Heart left ventricle (tissue), 16 donors: ENCODE measurements at regions of chr14 and their contacts with region 1.

Region 1: DNA sequence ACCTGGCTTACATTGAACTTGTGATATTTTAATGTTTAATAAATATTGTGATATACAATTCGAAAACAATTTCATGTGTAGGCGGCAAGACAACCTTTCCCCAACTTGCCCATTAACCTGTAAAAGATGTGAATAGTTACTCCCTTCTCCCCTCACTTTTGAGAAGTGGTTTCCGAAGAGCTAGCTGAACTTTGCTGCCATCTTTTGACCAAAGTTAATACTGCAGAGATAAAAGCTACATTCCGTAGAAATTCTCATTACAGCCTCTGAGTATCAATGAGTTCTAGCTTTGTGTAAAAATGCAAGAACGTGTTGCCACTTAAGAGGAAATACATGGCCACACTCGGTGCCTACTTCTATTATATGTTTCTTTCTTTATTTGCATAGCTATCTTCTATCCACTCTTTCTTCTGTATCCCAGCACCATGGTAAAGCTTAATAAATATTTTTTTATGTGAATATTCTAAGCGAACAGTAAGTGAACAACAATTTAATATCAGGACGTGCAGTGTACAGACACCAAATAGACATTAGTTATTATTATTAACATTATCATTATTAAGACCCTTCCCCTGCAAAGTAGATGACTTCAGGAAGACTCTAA is 105.1 kb upstream of the TMEM260 start:
- DNase-seq: no peak
- ATAC-seq: no peak
- H3K4me3 ChIP-seq: no peak overlapping the region
- H3K27ac ChIP-seq: no peak overlapping the region
- H3K4me1 ChIP-seq: no peaks in the 10 kb centered on the region
- H3K27me3 ChIP-seq: peaks cover 0 to 8% (median 0%) of the 10 kb centered on the region in 9 donors
- CTCF ChIP-seq: peak; percentile 69 to 93 (median 82)
- POLR2A ChIP-seq: no peak

Region 2: DNA sequence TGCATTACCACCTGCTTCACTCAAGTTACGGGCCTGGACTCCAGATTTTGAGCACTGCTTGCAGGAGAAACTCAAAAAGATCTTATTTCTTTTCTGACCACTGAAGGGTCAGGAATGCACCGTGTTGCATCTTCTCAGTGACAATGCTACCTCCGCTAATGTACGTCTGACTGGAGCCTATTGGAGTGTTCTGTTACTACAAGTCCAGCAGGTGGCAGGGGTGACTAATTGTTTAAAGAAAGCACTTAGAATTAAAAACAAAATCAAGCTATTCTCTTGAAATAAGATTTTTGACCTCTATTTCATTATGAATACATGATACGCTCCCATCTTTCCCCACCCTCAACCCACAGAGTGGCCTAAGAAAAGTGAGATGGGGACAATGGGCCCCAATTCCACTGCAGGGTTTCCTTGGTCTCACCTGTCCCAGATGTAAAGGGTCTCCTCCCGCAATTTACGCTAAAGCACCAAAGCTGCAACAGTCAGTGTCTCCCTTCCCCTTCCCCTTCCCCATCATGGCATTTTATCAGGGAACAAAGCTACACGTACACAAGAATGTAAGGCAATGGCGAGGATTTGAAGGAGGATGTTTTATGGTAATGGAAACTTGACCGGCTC is 1036.3 kb before region 1 on chr14:
- intact Hi-C with region 1: loop called in 5 of 10 experiments (anchors 5 to 10 kb)
- DNase-seq: no peak
- ATAC-seq: peak in 3 of 4 donors; percentile 57 to 66 (median 57)
- H3K4me3 ChIP-seq: no peak overlapping the region
- H3K27ac ChIP-seq: no peak overlapping the region
- H3K4me1 ChIP-seq: no peaks in the 10 kb centered on the region
- H3K27me3 ChIP-seq: peaks cover 0 to 17% (median 0%) of the 10 kb centered on the region in 9 donors
- CTCF ChIP-seq: peak; percentile 22 to 65 (median 46)
- POLR2A ChIP-seq: no peak

Region 3: DNA sequence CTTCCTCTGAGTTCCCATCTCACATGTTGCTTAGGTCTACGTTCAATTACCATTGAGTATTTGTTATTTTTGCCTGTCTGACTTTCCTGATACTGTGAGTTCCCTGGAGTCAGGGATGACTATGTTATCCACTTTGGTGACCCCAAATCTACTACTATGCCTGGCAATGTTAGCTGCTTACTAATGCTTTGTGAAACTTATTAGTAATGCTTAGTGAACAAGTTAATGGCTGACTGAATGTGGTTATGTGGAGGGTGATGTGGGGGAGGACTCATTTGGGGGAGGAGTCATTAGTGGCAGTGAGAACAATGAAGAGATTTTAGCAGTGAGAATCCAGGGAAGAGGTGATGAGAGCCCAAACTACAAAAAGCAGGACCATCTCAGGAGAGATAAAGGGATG is 772.9 kb before region 1 on chr14:
- intact Hi-C with region 1: loop called in 8 of 10 experiments (anchors 2 to 5 kb)
- DNase-seq: no peak
- ATAC-seq: no peak
- H3K4me3 ChIP-seq: no peak overlapping the region
- H3K27ac ChIP-seq: no peak overlapping the region
- H3K4me1 ChIP-seq: no peaks in the 10 kb centered on the region
- H3K27me3 ChIP-seq: no peaks in the 10 kb centered on the region
- CTCF ChIP-seq: no peak
- POLR2A ChIP-seq: no peak

Region 4: GRCh38 chr14:55731881-55732498 is 742.5 kb before region 1 on chr14:
- intact Hi-C with region 1: loop called in 4 of 10 experiments (anchors 5 to 10 kb)
- DNase-seq: peak in 1 of 5 donors; percentile 32
- ATAC-seq: no peak
- H3K4me3 ChIP-seq: no peak overlapping the region
- H3K27ac ChIP-seq: no peak overlapping the region
- H3K4me1 ChIP-seq: no peaks in the 10 kb centered on the region
- H3K27me3 ChIP-seq: no peaks in the 10 kb centered on the region
- CTCF ChIP-seq: peak; percentile 35 to 70 (median 58)
- POLR2A ChIP-seq: no peak

Region 5: DNA sequence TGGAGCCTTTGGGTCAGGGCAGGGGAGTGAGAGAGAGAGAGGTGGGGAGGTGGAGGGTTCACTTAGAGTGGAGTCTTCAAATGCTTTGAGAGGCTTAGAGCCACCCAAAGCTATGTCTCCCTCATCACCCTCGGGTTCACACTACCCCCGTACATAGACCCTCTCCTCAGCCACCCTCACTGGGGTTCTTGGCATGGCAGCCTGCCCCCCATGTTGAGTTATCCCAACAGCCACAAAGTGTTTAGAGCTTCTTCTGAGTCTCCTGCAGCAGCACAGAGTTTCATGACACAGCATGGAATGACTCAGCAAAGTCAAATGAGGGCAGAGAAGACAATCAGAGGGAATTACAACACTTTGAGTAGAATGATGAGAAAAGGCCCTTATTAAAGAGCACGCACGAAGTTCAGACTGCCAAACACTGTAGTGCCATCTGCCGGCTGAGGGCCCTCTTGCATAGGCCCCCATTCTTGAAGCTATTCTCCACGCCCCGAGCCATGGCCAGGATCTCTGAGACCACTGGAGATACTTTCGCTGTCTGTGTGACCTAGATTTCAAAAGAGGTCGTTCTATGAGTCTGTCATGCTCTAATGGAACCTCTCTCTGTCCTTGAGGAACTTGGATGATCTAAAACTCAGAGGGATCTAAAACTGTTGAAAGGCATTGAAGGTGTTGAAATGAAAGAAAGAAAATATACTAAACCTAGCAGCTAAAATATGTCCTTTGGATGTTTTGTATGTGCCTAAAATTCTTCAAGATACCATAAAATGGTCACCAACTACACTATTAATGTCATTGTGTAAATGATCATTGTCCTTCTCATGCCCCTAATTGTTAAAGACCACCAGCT is 134.4 kb before region 1 on chr14:
- intact Hi-C with region 1: loop called in 1 of 10 experiments (anchors 5 kb)
- DNase-seq: peak; percentile 67 to 80 (median 73)
- ATAC-seq: peak; percentile 84 to 95 (median 91)
- H3K4me3 ChIP-seq: no peak overlapping the region
- H3K27ac ChIP-seq: peak overlapping the region in 1 of 12 donors; percentile 8
- H3K4me1 ChIP-seq: peaks cover 0 to 33% (median 21%) of the 10 kb centered on the region in 12 donors
- H3K27me3 ChIP-seq: no peaks in the 10 kb centered on the region
- CTCF ChIP-seq: peak; percentile 65 to 92 (median 82)
- POLR2A ChIP-seq: no peak

Region 6: GRCh38 chr14:56452940-56453339 is 21.6 kb before region 1 on chr14:
- intact Hi-C with region 1: no loop called
- DNase-seq: no peak
- ATAC-seq: no peak
- H3K4me3 ChIP-seq: no peak overlapping the region
- H3K27ac ChIP-seq: no peak overlapping the region
- H3K4me1 ChIP-seq: no peaks in the 10 kb centered on the region
- H3K27me3 ChIP-seq: peaks cover 0 to 16% (median 0%) of the 10 kb centered on the region in 9 donors
- CTCF ChIP-seq: no peak
- POLR2A ChIP-seq: no peak

Region 7: GRCh38 chr14:56617084-56617483 is 142.6 kb after region 1 on chr14:
- intact Hi-C with region 1: no loop called
- DNase-seq: no peak
- ATAC-seq: no peak
- H3K4me3 ChIP-seq: no peak overlapping the region
- H3K27ac ChIP-seq: no peak overlapping the region
- H3K4me1 ChIP-seq: no peaks in the 10 kb centered on the region
- H3K27me3 ChIP-seq: no peaks in the 10 kb centered on the region
- CTCF ChIP-seq: no peak
- POLR2A ChIP-seq: no peak